PC-3 (cell line): ENCODE measurements at regions of chr12 and their contacts with region 1.

Region 1: DNA sequence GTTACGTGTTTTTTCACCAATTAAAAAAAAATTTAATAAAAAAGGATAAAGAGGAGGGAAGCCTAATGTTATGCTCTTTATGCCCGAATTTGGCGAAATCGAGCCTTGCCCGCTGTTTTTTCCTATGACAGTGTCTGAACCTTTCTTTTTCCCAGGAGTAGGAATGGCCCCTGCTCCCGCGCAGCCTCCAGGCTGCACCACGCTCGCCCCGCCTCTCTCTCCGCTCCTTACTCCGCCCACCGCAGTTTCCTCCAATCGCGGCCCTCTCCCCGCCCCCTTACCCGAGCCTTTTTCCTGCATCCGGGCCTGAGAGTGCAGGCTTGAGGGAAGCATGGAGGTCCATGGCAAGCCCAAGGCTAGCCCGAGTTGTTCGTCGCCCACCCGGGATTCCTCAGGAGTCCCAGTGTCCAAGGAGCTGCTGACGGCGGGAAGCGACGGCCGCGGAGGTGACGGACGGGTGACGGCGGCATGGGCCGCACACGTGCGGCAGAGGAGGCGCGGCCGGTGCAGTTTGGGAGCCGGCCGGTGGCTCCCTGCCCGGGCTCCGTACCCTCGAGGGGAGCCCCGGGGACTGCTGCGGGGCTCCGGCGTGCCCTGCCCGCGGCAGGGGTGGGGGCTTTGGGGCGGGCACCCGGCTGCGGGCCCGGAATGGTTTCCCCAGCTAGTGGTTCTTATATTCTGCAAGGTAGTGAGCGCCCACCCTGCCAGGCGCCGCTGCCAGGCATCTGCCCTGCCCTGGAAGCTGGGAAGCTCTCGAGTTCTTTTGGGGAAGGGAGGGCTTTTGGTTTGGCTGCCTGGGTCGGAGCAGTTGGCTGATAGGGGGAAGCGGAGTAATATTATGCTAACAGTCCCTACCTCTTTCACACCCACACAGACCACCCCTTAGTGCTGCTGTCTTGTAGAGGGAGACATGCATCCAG is at the start of gene NOPCHAP1:
- DNase-seq: peak; percentile 94
- ATAC-seq: peak; percentile 98
- H3K4me3 ChIP-seq: peak within 1 kb of the TSS; percentile 79
- H3K27ac ChIP-seq: peak within 1 kb of the TSS; percentile 6; the same call in 1 of the 2 replicates
- H3K4me1 ChIP-seq: peaks cover 22% of the 10 kb centered on the region
- H3K27me3 ChIP-seq: no peaks in the 10 kb centered on the region
- CTCF ChIP-seq: no peak
- total RNA-seq, gene NOPCHAP1: 21.8 and 37.8 TPM in 2 replicates

Region 2: GRCh38 chr12:104951759-104952509 is 34.3 kb before region 1 on chr12:
- CTCF ChIA-PET with region 1: no interaction called
- POLR2A ChIA-PET with region 1: no interaction called
- intact Hi-C with region 1: no loop called
- DNase-seq: peak; percentile 80
- ATAC-seq: peak; percentile 95
- H3K4me3 ChIP-seq: no peak overlapping the region
- H3K27ac ChIP-seq: no peak overlapping the region
- H3K4me1 ChIP-seq: peaks cover 33% of the 10 kb centered on the region
- H3K27me3 ChIP-seq: no peaks in the 10 kb centered on the region
- CTCF ChIP-seq: no peak

Region 3: GRCh38 chr12:105030820-105031807 is 44.8 kb after region 1 on chr12:
- CTCF ChIA-PET with region 1: no interaction called
- POLR2A ChIA-PET with region 1: no interaction called
- intact Hi-C with region 1: loop called (anchors 2 kb)
- DNase-seq: no peak
- ATAC-seq: peak; percentile 64
- H3K4me3 ChIP-seq: no peak overlapping the region
- H3K27ac ChIP-seq: no peak overlapping the region
- H3K4me1 ChIP-seq: no peaks in the 10 kb centered on the region
- H3K27me3 ChIP-seq: no peaks in the 10 kb centered on the region
- CTCF ChIP-seq: no peak

Region 4: DNA sequence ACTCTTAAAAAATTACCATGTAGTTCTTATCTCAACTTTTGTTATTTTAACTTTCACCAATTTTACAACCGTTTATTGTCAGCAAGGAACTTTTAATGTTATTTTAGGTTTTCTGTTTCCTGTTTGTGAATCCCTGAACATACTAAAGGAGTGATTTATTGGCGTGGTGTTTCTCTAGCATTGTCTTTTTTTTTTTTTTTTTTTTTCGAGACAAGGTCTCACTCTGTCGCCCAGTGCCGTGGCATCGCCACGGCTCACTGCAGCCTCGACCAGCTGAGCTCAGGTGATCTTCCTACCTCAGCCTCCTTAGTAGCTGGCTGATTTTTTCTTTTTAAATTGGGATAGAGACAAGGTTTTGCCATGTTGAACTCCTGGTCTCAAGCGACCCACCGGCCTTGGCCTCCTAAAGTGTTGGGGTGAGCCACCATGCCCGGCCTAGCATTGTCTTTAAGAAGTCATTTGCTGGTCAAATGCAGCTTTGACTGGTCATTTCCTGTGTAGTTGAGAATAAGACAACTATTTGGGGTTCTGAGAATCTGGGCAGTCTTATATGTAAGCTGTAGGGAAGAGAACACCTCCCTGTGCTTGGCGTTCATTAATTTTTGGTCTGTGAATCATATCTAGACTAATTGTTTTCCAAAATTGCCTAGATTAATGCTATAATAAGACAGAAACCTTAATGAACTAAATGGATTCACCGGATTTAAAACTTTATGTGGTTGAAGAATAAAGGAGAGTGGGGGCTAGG is 123.4 kb after region 1 on chr12:
- CTCF ChIA-PET with region 1: no interaction called
- POLR2A ChIA-PET with region 1: no interaction called
- intact Hi-C with region 1: no loop called
- DNase-seq: peak; percentile 21
- ATAC-seq: no peak
- H3K4me3 ChIP-seq: peak overlapping the region; percentile 72
- H3K27ac ChIP-seq: no peak overlapping the region
- H3K4me1 ChIP-seq: peaks cover 24% of the 10 kb centered on the region; the same call in 1 of the 2 replicates
- H3K27me3 ChIP-seq: no peaks in the 10 kb centered on the region
- CTCF ChIP-seq: no peak